Breast epithelium (tissue), 4 donors: ENCODE measurements at regions of chr3 and their contacts with region 1.

Region 1: DNA sequence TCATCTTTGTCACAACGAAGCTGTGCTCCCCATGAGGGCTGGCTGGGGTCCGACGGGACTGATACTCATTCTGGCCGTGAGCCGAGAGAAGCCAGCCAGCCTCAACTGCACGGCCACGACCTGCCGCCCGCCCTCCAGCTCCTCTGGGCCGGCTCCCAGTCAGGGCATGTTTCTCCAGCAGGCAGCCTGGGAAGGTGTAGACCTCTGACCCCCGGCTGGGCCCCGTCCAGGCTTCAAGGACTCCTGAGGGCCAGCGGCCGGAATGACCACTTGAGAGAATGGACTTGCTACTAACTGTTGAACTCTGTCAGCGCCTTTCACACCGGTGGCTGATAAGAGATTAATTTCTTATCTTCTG is 18.1 kb upstream of the MUC4 start:
- DNase-seq: no peak
- H3K4me3 ChIP-seq: no peak overlapping the region
- H3K27ac ChIP-seq: no peak overlapping the region
- H3K4me1 ChIP-seq: no peaks in the 10 kb centered on the region
- H3K27me3 ChIP-seq: no peaks in the 10 kb centered on the region
- CTCF ChIP-seq: no peak
- POLR2A ChIP-seq: no peak

Region 2: GRCh38 chr3:195692354-195692685 is 137.6 kb before region 1 on chr3:
- intact Hi-C with region 1: loop called (anchors 5 kb)
- DNase-seq: no peak
- H3K4me3 ChIP-seq: no peak overlapping the region
- H3K27ac ChIP-seq: no peak overlapping the region
- H3K4me1 ChIP-seq: no peaks in the 10 kb centered on the region
- H3K27me3 ChIP-seq: no peaks in the 10 kb centered on the region
- CTCF ChIP-seq: no peak
- POLR2A ChIP-seq: no peak

Region 3: DNA sequence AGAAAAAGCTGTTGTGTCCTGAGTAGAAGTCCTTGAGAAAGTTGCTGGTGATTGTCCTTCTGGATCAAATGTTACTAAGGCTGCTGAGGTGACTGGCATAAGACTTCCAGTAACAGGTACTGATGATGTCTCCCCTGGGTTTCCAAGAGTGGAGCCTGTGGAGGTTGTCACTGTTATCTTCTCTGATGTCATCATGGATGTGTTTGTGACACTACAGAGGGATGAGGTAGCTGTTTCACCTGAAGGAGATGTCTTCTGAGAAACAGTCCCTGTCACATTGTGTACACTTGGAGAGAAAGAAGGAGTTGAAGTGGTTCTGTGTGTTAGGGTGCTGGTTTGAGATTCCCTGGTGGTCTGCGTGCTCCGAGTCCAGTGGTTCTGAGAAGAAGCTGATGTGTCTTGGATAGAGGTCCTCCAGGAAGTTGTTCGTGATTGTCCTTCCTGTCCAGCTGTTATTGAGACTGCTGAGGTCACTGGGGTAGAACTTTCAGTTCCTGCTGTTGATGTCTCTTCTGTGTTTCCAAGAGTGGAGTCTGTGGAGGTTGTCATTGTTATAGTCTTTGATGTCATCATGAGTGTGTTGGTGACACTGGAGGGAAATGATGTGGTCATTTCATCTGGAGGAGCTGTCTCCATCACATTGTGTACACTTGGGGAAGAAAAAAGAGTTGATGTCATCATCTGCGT is 39.1 kb before region 1 on chr3:
- intact Hi-C with region 1: loop called (anchors 1 kb)
- DNase-seq: no peak
- H3K4me3 ChIP-seq: no peak overlapping the region
- H3K27ac ChIP-seq: no peak overlapping the region
- H3K4me1 ChIP-seq: no peaks in the 10 kb centered on the region
- H3K27me3 ChIP-seq: no peaks in the 10 kb centered on the region
- CTCF ChIP-seq: no peak
- POLR2A ChIP-seq: no peak